ENCODE measurements at regions of chr15 and their contacts with region 1.

Region 1: GRCh38 chr15:88904624-88905327 is 8.4 kb downstream of the MFGE8 start:
- DNase-seq: peak; percentile 97
- H3K4me3 Mint-ChIP-seq: peak overlapping the region; percentile 28
- H3K27ac Mint-ChIP-seq: peak overlapping the region; percentile 95
- H3K4me1 Mint-ChIP-seq: peaks cover 34% of the 10 kb centered on the region
- H3K27me3 Mint-ChIP-seq: no peaks in the 10 kb centered on the region

Region 2: GRCh38 chr15:88476635-88477060 is 428.1 kb before region 1 on chr15:
- CTCF ChIA-PET with region 1: no interaction called
- POLR2A ChIA-PET with region 1: no interaction called
- DNase-seq: peak; percentile 38
- H3K4me3 Mint-ChIP-seq: no peak overlapping the region
- H3K27ac Mint-ChIP-seq: no peak overlapping the region
- H3K4me1 Mint-ChIP-seq: peaks cover 2% of the 10 kb centered on the region
- H3K27me3 Mint-ChIP-seq: no peaks in the 10 kb centered on the region

Region 3: DNA sequence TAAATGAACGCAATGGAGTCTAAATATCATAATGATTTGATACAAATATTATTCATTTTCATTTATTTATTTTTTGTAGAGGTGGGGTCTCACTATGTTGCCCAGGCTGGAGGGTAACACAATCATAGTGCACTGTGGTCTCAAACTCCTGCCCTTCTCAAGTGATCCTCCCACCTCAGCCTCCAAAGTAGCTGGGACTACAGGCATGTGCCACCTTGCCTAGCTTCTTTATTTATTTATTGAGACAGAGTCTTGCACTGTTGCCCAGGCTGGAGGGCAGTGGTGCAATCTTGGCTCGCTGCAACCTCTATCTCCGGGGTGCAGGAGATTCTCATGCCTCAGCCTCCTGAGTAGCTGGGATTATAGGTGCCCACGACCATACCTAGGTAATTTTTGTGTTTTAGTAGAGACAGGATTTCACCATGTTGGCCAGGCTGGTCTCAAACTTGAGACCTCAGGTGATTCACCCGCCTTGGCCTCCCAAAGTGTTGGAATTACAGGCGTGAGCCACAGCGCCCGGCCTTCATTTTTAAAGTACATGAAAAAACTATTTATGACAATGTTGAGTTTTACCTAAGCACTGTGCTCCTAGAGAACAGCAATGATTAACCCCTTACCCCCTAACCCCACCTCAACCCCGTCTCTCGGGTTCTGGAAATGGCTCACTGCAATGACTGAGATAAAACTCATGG is 287.6 kb before region 1 on chr15:
- CTCF ChIA-PET with region 1: no interaction called
- POLR2A ChIA-PET with region 1: no interaction called
- DNase-seq: no peak
- H3K4me3 Mint-ChIP-seq: no peak overlapping the region
- H3K27ac Mint-ChIP-seq: no peak overlapping the region
- H3K4me1 Mint-ChIP-seq: peaks cover 14% of the 10 kb centered on the region
- H3K27me3 Mint-ChIP-seq: peaks cover 18% of the 10 kb centered on the region

Region 4: GRCh38 chr15:88887068-88887580 is 17.7 kb before region 1 on chr15:
- CTCF ChIA-PET with region 1: interaction called, 11 read pairs
- POLR2A ChIA-PET with region 1: no interaction called
- DNase-seq: no peak
- H3K4me3 Mint-ChIP-seq: no peak overlapping the region
- H3K27ac Mint-ChIP-seq: no peak overlapping the region
- H3K4me1 Mint-ChIP-seq: no peaks in the 10 kb centered on the region
- H3K27me3 Mint-ChIP-seq: no peaks in the 10 kb centered on the region

Region 5: DNA sequence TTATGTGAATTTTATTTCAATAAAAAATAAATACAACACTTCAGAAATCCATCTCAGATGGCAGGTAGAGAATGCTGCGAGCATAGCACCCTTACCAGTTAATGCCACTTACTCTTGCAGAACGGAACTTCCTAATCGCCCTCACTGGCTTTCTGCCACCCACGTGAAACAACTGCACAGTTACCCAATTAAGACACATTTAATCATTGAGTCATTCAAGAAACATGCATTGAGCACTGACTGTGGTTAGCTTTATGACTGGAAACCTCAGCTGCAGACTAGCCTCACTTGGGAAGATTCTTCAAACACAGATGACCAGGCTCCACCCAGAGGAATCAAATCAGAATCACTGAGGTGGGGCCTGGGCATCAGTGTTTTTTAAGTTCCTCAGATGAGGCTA is 14.0 kb after region 1 on chr15:
- CTCF ChIA-PET with region 1: interaction called, 45 read pairs
- POLR2A ChIA-PET with region 1: no interaction called
- DNase-seq: no peak
- H3K4me3 Mint-ChIP-seq: no peak overlapping the region
- H3K27ac Mint-ChIP-seq: no peak overlapping the region
- H3K4me1 Mint-ChIP-seq: peaks cover 21% of the 10 kb centered on the region
- H3K27me3 Mint-ChIP-seq: peaks cover 4% of the 10 kb centered on the region

Region 6: GRCh38 chr15:89087830-89088604 is 183.2 kb after region 1 on chr15 and contains the start of gene ABHD2:
- CTCF ChIA-PET with region 1: interaction called, 11 read pairs
- POLR2A ChIA-PET with region 1: no interaction called
- DNase-seq: peak; percentile 99
- H3K4me3 Mint-ChIP-seq: no peak within 1 kb of the TSS
- H3K27ac Mint-ChIP-seq: peak within 1 kb of the TSS; percentile 78
- H3K4me1 Mint-ChIP-seq: peaks cover 34% of the 10 kb centered on the region
- H3K27me3 Mint-ChIP-seq: no peaks in the 10 kb centered on the region
- total RNA-seq, gene ABHD2: 79.7 to 89.0 TPM